ENCODE measurements at regions of chr7 and their contacts with region 1.

Region 1: GRCh38 chr7:106056513-106057203 is 55.5 kb downstream of the SYPL1 start:
- DNase-seq: peak; percentile 71 to 93
- H3K4me3 ChIP-seq: no peak overlapping the region
- CTCF ChIP-seq: peak in 1 of 3 donors; percentile 83
- POLR2A ChIP-seq: no peak

Region 2: DNA sequence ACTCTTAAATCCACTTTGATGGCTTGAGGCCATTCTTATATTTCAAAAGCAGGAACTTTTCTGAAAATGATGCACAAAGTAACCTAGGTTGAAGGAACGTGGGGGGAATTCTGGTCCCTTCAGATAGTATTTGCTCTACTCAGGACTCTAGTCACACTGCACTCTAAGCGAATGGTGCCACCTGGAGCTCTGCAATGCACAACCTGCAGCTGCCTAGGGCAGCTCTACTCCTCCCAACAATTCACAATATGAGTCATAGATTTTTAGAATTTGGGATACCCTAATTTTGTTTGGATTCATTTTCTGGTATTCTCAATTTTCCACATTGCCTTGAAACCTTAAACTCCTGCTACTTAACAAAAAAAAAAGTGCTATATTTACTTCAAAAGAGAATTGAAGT is 38.1 kb after region 1 on chr7:
- intact Hi-C with region 1: loop called (anchors 5 kb)
- DNase-seq: no peak
- H3K4me3 ChIP-seq: no peak overlapping the region
- CTCF ChIP-seq: no peak
- POLR2A ChIP-seq: no peak